ENCODE measurements at regions of chr11 and their contacts with region 1.

Region 1: DNA sequence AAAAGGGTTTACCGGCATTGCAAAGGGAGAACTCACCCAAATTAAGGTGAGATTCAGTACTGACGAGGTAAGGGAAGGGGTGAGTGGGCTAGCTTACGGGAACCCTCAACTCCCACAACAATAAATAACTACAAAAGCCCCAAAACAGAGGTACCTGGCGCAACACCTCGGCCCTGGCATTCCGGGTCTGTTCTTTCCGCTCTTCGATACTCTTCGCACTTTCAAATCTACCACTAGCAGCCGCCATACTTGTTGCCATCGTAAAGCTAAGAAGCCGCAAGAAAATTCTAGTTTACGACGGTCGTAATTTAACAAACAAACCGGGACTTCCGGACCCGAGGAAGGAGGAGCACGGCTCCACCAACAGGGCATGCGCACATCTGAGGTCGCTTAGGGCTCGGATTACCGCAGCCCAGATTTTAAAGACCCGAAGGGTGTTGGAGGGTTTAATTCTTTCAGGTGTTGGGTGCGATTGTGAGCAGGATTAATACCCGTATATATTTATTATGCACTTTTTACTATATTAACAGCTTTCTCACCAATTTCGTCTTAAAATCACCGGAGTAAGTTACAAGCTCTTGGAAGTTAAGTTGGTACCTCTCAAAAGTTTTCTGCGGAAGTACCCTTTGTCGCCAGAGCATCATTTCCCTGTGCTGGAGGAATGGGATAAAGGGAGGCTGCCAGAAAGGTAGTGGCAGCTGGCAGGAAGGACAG is at the start of gene CWF19L2:
- DNase-seq: peak; percentile 62 to 94 (median 92)
- ATAC-seq: peak; percentile 99
- H3K4me3 ChIP-seq: peak within 1 kb of the TSS; percentile 91
- H3K4me3 Mint-ChIP-seq: peak within 1 kb of the TSS; percentile 84 to 100 (median 93)
- H3K27ac ChIP-seq: peak within 1 kb of the TSS; percentile 82
- H3K27ac Mint-ChIP-seq: peak within 1 kb of the TSS; percentile 87 to 98 (median 96)
- H3K4me1 ChIP-seq: peaks cover 7 to 13% of the 10 kb centered on the region in 2 donors
- H3K4me1 Mint-ChIP-seq: peaks cover 19 to 50% (median 32%) of the 10 kb centered on the region in 7 donors
- H3K27me3 ChIP-seq: no peaks in the 10 kb centered on the region
- H3K27me3 Mint-ChIP-seq: peaks cover 0 to 10% (median 0%) of the 10 kb centered on the region in 5 donors
- total RNA-seq, gene CWF19L2: 17.0 to 38.9 (median 27.2) TPM

Region 2: GRCh38 chr11:106076919-106077608 is 1380.7 kb before region 1 on chr11 and contains the start of gene KBTBD3:
- CTCF ChIA-PET with region 1: no interaction called
- POLR2A ChIA-PET with region 1: no interaction called
- intact Hi-C with region 1: loop called (anchors 1 to 2 kb)
- DNase-seq: peak; percentile 90 to 99 (median 98)
- ATAC-seq: peak; percentile 93
- H3K4me3 ChIP-seq: peak within 1 kb of the TSS; percentile 85
- H3K4me3 Mint-ChIP-seq: peak within 1 kb of the TSS; percentile 95 to 100 (median 98)
- H3K27ac ChIP-seq: peak within 1 kb of the TSS; percentile 91
- H3K27ac Mint-ChIP-seq: peak within 1 kb of the TSS; percentile 91 to 99 (median 98)
- H3K4me1 ChIP-seq: peaks cover 29 to 35% of the 10 kb centered on the region in 2 donors
- H3K4me1 Mint-ChIP-seq: peaks cover 34 to 76% (median 69%) of the 10 kb centered on the region in 7 donors
- H3K27me3 ChIP-seq: no peaks in the 10 kb centered on the region
- H3K27me3 Mint-ChIP-seq: no peaks in the 10 kb centered on the region
- total RNA-seq, gene KBTBD3: 5.1 to 16.6 (median 7.3) TPM

Region 3: GRCh38 chr11:107689317-107690202 is 231.8 kb after region 1 on chr11:
- CTCF ChIA-PET with region 1: no interaction called
- POLR2A ChIA-PET with region 1: no interaction called
- intact Hi-C with region 1: loop called in 1 of 2 experiments (anchors 1 kb)
- DNase-seq: peak; percentile 7 to 51 (median 45)
- ATAC-seq: peak; percentile 84
- H3K4me3 ChIP-seq: no peak overlapping the region
- H3K4me3 Mint-ChIP-seq: no peak overlapping the region
- H3K27ac ChIP-seq: no peak overlapping the region
- H3K27ac Mint-ChIP-seq: no peak overlapping the region
- H3K4me1 ChIP-seq: no peaks in the 10 kb centered on the region
- H3K4me1 Mint-ChIP-seq: peaks cover 0 to 5% (median 0%) of the 10 kb centered on the region in 7 donors
- H3K27me3 ChIP-seq: no peaks in the 10 kb centered on the region
- H3K27me3 Mint-ChIP-seq: peaks cover 12 to 26% (median 20%) of the 10 kb centered on the region in 5 donors

Region 4: DNA sequence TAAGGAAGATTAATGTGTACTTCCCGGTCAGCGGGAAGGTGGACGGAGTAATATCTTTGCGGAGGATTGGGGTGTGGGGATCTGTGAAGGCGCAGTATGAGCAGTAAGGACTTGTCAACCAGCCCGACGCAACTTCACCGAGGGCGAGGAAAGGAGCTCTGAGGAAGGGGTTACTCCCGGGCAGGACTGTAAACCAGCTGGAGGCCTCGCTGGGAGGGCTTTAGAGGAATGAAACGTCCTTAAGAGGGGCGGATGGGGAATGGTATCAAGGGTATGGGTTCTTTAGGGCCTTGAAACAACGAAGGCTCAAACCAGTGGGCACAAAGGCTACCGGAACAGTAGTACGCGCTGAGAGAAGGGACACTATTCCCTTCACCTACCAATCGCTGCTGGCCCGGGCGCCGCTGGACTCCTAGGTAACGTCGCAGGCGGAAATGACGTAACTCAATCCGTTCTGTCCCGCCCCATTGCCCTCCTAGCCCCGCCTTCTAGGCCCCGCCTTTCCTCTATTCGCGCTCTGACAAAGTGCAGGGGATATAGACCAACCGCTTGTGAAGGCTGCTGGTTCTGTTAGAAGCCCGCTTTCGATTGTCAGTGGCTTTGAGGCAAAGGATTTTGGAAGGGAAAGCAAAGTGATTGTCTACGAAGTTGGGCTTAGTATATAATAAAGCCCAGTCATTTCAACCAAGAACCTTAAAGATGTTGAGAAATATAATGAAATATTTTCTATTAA is 1009.5 kb after region 1 on chr11 and contains the start of gene C11orf65:
- CTCF ChIA-PET with region 1: no interaction called
- POLR2A ChIA-PET with region 1: no interaction called
- intact Hi-C with region 1: loop called (anchors 1 kb)
- DNase-seq: peak; percentile 88 to 97 (median 94)
- ATAC-seq: peak; percentile 98
- H3K4me3 ChIP-seq: peak within 1 kb of the TSS; percentile 81
- H3K4me3 Mint-ChIP-seq: peak within 1 kb of the TSS; percentile 93 to 100 (median 98)
- H3K27ac ChIP-seq: peak within 1 kb of the TSS; percentile 93
- H3K27ac Mint-ChIP-seq: peak within 1 kb of the TSS; percentile 98 to 100 (median 100)
- H3K4me1 ChIP-seq: peaks cover 3 to 5% of the 10 kb centered on the region in 2 donors
- H3K4me1 Mint-ChIP-seq: peaks cover 0 to 27% (median 17%) of the 10 kb centered on the region in 7 donors
- H3K27me3 ChIP-seq: no peaks in the 10 kb centered on the region
- H3K27me3 Mint-ChIP-seq: no peaks in the 10 kb centered on the region
- total RNA-seq, gene C11orf65: 0.27 to 1.5 (median 0.51) TPM

Region 5: DNA sequence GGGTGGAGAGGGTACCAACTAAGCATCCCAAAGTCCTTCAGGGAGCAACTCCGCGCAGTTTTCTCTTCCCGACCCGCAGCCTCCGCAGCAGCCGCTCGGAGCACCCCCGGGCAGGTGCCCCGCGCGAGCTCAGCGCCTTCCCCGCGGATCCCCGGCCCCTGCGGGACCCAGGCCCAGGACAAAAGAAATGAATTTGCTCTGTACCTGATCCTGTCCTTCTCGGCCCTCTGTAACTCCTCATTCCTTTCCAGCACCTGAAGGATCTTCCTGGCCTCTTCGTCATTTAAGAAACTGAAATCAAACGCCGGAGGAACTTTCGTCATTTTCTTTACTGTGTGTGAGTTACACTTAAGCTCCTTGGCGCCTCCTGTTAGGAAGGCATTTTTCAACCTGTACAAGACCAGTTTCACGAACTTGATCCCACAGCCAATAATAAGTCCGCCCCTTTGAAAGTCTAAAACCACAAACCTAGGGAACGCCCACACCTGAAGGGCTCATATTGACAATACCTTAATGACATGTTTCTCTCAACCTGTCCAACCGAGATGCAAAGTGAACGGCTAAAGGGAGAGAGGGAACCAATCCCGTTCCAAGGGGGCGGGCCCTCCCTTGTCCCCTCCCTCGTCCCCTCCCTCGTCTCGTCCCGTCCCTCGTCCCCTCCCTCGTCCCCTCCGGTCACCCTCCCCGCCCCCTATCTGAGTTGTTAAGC is 1135.7 kb after region 1 on chr11 and contains the start of gene EXPH5:
- CTCF ChIA-PET with region 1: no interaction called
- POLR2A ChIA-PET with region 1: interaction called, 3 read pairs
- intact Hi-C with region 1: loop called in 1 of 2 experiments (anchors 2 kb)
- DNase-seq: peak; percentile 62 to 89 (median 87)
- ATAC-seq: peak; percentile 97
- H3K4me3 ChIP-seq: peak within 1 kb of the TSS; percentile 75
- H3K4me3 Mint-ChIP-seq: peak within 1 kb of the TSS; percentile 90 to 100 (median 97)
- H3K27ac ChIP-seq: peak within 1 kb of the TSS; percentile 81
- H3K27ac Mint-ChIP-seq: peak within 1 kb of the TSS; percentile 79 to 98 (median 95)
- H3K4me1 ChIP-seq: peaks cover 0 to 13% of the 10 kb centered on the region in 2 donors
- H3K4me1 Mint-ChIP-seq: peaks cover 12 to 27% (median 22%) of the 10 kb centered on the region in 7 donors
- H3K27me3 ChIP-seq: no peaks in the 10 kb centered on the region
- H3K27me3 Mint-ChIP-seq: peaks cover 0 to 60% (median 0%) of the 10 kb centered on the region in 5 donors
- total RNA-seq, gene EXPH5: 1.9 to 8.3 (median 5.9) TPM